ENCODE measurements at regions of chr5 and their contacts with region 1.

Region 1: DNA sequence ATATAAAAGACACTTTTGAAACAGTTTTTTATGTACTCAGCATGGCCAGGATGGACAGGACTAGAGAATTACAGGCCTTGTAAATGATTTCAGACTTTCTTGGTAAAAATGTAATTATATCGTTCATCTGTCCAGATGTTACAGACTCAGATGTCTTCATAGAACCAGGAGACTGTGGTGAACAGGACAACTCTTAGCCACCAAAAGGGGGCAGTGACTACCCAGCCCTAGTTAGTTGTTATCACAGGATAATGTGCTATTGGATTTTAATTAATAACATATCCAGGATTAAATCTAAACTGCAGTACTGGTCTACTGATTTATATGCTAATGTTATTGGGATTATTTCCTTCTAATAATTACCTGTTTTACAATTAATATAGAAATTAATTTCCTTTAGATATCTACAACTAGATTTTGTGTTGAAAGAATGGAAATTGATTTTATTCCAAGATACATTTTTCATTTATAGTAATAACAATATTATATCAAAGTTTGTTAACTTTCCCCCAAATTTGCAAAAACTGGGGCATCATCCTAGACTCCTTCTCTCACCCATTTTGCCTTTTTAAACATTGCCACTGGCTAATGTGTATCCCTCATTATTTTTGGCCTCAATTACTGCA is 99.4 kb downstream of the MTREX start:
- DNase-seq: no peak
- H3K4me3 ChIP-seq: no peak overlapping the region
- H3K27ac ChIP-seq: no peak overlapping the region
- H3K4me1 ChIP-seq: peaks cover 0 to 7% (median 0%) of the 10 kb centered on the region in 6 donors
- H3K27me3 ChIP-seq: no peaks in the 10 kb centered on the region
- CTCF ChIP-seq: peak in 6 of 11 experiments; percentile 26 to 53 (median 44)
- POLR2A ChIP-seq: no peak

Region 2: GRCh38 chr5:55680353-55680752 is 273.2 kb after region 1 on chr5:
- intact Hi-C with region 1: loop called (anchors 10 kb)
- DNase-seq: no peak
- H3K4me3 ChIP-seq: no peak overlapping the region
- H3K27ac ChIP-seq: no peak overlapping the region
- H3K4me1 ChIP-seq: peaks cover 0 to 3% (median 0%) of the 10 kb centered on the region in 6 donors
- H3K27me3 ChIP-seq: no peaks in the 10 kb centered on the region
- CTCF ChIP-seq: no peak
- POLR2A ChIP-seq: no peak

Measured in spleen (tissue), 13 donors.